Activated T-helper 2 cell treated with anti-CD3 and anti-CD28 coated beads, Interferon-gamma antibody, Interleukin-2, Interleukin-4, amounts not matched to agents 10 μg/mL and 5 μg/mL and 100 μg/mL, durations not matched to agents 14 hours and 24 hours and 36 hours (primary cell): ENCODE measurements at regions of chr3 and their contacts with region 1.

Region 1: GRCh38 chr3:154018100-154018696 is 103.0 kb upstream of the ARHGEF26 start:
- DNase-seq: peak; percentile 9
- H3K4me3 Mint-ChIP-seq: no peak overlapping the region
- H3K27ac Mint-ChIP-seq: no peak overlapping the region
- H3K4me1 Mint-ChIP-seq: no peaks in the 10 kb centered on the region
- H3K27me3 Mint-ChIP-seq: no peaks in the 10 kb centered on the region

Region 2: GRCh38 chr3:153026026-153026425 is 992.2 kb before region 1 on chr3:
- intact Hi-C with region 1: loop called (anchors 10 kb)
- DNase-seq: no peak
- H3K4me3 Mint-ChIP-seq: no peak overlapping the region
- H3K27ac Mint-ChIP-seq: no peak overlapping the region
- H3K4me1 Mint-ChIP-seq: no peaks in the 10 kb centered on the region
- H3K27me3 Mint-ChIP-seq: peaks cover 11% of the 10 kb centered on the region

Region 3: GRCh38 chr3:153903430-153903829 is 114.8 kb before region 1 on chr3:
- intact Hi-C with region 1: no loop called
- DNase-seq: no peak
- H3K4me3 Mint-ChIP-seq: no peak overlapping the region
- H3K27ac Mint-ChIP-seq: no peak overlapping the region
- H3K4me1 Mint-ChIP-seq: no peaks in the 10 kb centered on the region
- H3K27me3 Mint-ChIP-seq: no peaks in the 10 kb centered on the region

Region 4: GRCh38 chr3:154089452-154090420 is 71.5 kb after region 1 on chr3:
- intact Hi-C with region 1: no loop called
- DNase-seq: no peak
- H3K4me3 Mint-ChIP-seq: no peak overlapping the region
- H3K27ac Mint-ChIP-seq: no peak overlapping the region
- H3K4me1 Mint-ChIP-seq: no peaks in the 10 kb centered on the region
- H3K27me3 Mint-ChIP-seq: peaks cover 4% of the 10 kb centered on the region